IMR-90 (cell line): ENCODE measurements at regions of chr7 and their contacts with region 1.

Region 1: GRCh38 chr7:36440880-36441279 is 51.2 kb downstream of the ANLN start:
- DNase-seq: peak; percentile 46
- ATAC-seq: peak; percentile 82
- H3K4me3 ChIP-seq: no peak overlapping the region
- H3K27ac ChIP-seq: no peak overlapping the region
- H3K4me1 ChIP-seq: peaks cover 1% of the 10 kb centered on the region; the same call in 1 of the 2 replicates
- H3K27me3 ChIP-seq: no peaks in the 10 kb centered on the region
- CTCF ChIP-seq: peak; percentile 56
- POLR2A ChIP-seq: no peak
- RAD21 ChIP-seq: peak; percentile 52

Region 2: GRCh38 chr7:36487756-36488336 is 47.0 kb after region 1 on chr7:
- CTCF ChIA-PET with region 1: interaction called, 10 read pairs
- POLR2A ChIA-PET with region 1: no interaction called
- dilution Hi-C with region 1: no loop called
- in situ Hi-C with region 1: no loop called
- intact Hi-C with region 1: loop called (anchors 2 kb)
- DNase-seq: peak; percentile 68
- ATAC-seq: peak; percentile 85
- H3K4me3 ChIP-seq: no peak overlapping the region
- H3K27ac ChIP-seq: no peak overlapping the region
- H3K4me1 ChIP-seq: no peaks in the 10 kb centered on the region
- H3K27me3 ChIP-seq: peaks cover 19% of the 10 kb centered on the region
- CTCF ChIP-seq: peak; percentile 88
- POLR2A ChIP-seq: no peak
- RAD21 ChIP-seq: peak; percentile 94

Region 3: GRCh38 chr7:36535866-36536664 is 95.2 kb after region 1 on chr7:
- CTCF ChIA-PET with region 1: no interaction called
- POLR2A ChIA-PET with region 1: no interaction called
- dilution Hi-C with region 1: no loop called
- in situ Hi-C with region 1: no loop called
- intact Hi-C with region 1: no loop called
- DNase-seq: no peak
- ATAC-seq: no peak
- H3K4me3 ChIP-seq: no peak overlapping the region
- H3K27ac ChIP-seq: no peak overlapping the region
- H3K4me1 ChIP-seq: no peaks in the 10 kb centered on the region
- H3K27me3 ChIP-seq: peaks cover 4% of the 10 kb centered on the region; the same call in 1 of the 2 replicates
- CTCF ChIP-seq: no peak
- POLR2A ChIP-seq: no peak
- RAD21 ChIP-seq: no peak

Region 4: DNA sequence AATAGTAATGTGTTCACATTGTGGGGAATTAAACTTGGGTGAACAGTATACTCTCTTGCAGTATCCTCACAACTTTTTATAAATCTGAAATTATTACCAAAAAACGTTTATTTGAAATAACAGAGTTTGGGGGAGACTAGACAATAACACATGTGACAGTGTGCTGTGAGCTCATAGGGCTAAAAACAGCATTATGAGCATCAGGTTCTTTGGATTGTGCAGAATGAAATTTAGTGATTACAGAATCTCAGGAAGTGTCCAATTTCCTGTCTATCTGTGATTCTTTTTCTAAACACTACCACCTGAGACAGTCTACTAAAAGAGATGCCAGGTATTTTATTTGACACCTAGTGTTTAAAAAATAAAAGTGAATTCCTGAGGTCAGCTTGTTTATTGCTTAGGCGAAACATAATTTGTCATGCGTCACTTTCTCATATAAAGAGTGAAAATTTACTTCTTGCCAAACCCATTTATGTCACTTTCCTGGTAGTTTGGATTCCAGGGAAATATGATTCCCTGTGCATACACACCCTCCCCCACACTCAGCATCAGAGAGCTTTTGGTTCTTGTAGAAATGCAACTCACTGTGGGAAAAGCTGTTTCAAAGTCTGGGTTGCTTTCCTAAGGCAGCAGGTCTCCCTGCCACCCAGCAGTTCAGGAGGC is 212.3 kb after region 1 on chr7:
- CTCF ChIA-PET with region 1: interaction called, 3 read pairs
- POLR2A ChIA-PET with region 1: no interaction called
- dilution Hi-C with region 1: no loop called
- in situ Hi-C with region 1: no loop called
- intact Hi-C with region 1: loop called (anchors 5 kb)
- DNase-seq: peak; percentile 79
- ATAC-seq: peak; percentile 55
- H3K4me3 ChIP-seq: no peak overlapping the region
- H3K27ac ChIP-seq: peak overlapping the region; percentile 24; the same call in 1 of the 2 replicates
- H3K4me1 ChIP-seq: peaks cover 16% of the 10 kb centered on the region
- H3K27me3 ChIP-seq: no peaks in the 10 kb centered on the region
- CTCF ChIP-seq: no peak
- POLR2A ChIP-seq: no peak
- RAD21 ChIP-seq: no peak

Region 5: GRCh38 chr7:36690514-36691187 is 249.8 kb after region 1 on chr7:
- CTCF ChIA-PET with region 1: no interaction called
- POLR2A ChIA-PET with region 1: no interaction called
- dilution Hi-C with region 1: no loop called
- in situ Hi-C with region 1: no loop called
- intact Hi-C with region 1: no loop called
- DNase-seq: no peak
- ATAC-seq: no peak
- H3K4me3 ChIP-seq: no peak overlapping the region
- H3K27ac ChIP-seq: no peak overlapping the region
- H3K4me1 ChIP-seq: no peaks in the 10 kb centered on the region
- H3K27me3 ChIP-seq: peaks cover 2% of the 10 kb centered on the region; the same call in 1 of the 2 replicates
- CTCF ChIP-seq: no peak
- POLR2A ChIP-seq: no peak
- RAD21 ChIP-seq: no peak